PC-9 (cell line): ENCODE measurements at regions of chr3 and their contacts with region 1.

Region 1: GRCh38 chr3:141487521-141488252 is 860 bp downstream of the RASA2 start:
- DNase-seq: peak; percentile 72 to 82
- H3K4me3 ChIP-seq: peak overlapping the region; percentile 76
- H3K27ac ChIP-seq: peak overlapping the region; percentile 90
- H3K4me1 ChIP-seq: peaks cover 50% of the 10 kb centered on the region
- H3K27me3 ChIP-seq: no peaks in the 10 kb centered on the region
- CTCF ChIP-seq: no peak

Region 2: GRCh38 chr3:141275026-141275910 is 212.4 kb before region 1 on chr3:
- CTCF ChIA-PET with region 1: no interaction called
- POLR2A ChIA-PET with region 1: no interaction called
- intact Hi-C with region 1: no loop called
- DNase-seq: peak; percentile 48 to 98
- H3K4me3 ChIP-seq: peak overlapping the region; percentile 37; the same call in 1 of the 2 replicates
- H3K27ac ChIP-seq: peak overlapping the region; percentile 100
- H3K4me1 ChIP-seq: peaks cover 77% of the 10 kb centered on the region
- H3K27me3 ChIP-seq: no peaks in the 10 kb centered on the region
- CTCF ChIP-seq: no peak

Region 3: DNA sequence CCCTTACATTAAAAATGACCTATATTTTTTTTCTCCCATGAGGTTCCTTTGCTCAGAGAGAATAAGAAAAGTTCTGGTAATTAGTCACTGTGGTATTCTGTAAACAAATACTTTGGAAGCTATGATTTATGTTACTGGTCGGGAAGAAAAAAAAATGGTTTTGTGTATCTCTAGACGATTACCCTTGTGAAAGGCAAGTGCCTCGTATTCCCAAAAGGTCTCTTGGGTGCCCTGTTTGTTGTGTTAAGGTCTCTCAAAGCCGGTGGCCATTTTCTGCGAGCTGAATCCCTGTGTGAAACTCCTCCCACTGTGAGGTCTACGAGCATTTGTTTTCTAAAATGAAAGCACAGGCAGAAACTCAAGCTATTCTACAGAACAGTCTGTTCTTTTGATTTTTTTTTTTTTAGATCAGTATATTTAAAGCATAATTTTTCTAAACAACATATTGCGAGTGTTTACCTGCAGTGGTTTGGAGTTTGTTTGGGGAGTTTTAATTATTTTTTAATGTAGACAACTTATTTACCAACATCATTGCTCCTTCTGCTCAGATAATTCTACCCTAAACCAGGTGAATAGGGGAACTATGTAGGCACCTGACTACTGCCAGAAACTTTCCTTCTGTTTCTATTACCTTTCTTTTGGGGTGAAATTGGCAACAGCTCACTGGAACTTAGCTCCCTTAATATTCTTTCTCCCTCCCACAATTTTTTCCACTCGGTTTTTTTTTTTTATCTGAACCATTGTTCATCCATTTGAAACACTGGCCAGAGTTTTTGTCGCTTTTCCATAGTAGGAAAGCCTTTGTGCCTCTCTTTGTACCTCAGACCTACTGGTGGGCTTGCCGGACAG is 75.4 kb before region 1 on chr3:
- CTCF ChIA-PET with region 1: no interaction called
- POLR2A ChIA-PET with region 1: no interaction called
- intact Hi-C with region 1: no loop called
- DNase-seq: peak; percentile 33 to 80
- H3K4me3 ChIP-seq: peak overlapping the region; percentile 37; the same call in 1 of the 2 replicates
- H3K27ac ChIP-seq: peak overlapping the region; percentile 47
- H3K4me1 ChIP-seq: peaks cover 49% of the 10 kb centered on the region
- H3K27me3 ChIP-seq: no peaks in the 10 kb centered on the region
- CTCF ChIP-seq: no peak

Region 4: GRCh38 chr3:141460097-141460704 is 27.5 kb before region 1 on chr3:
- CTCF ChIA-PET with region 1: no interaction called
- POLR2A ChIA-PET with region 1: no interaction called
- intact Hi-C with region 1: loop called (anchors 2 kb)
- DNase-seq: peak; percentile 57 to 86
- H3K4me3 ChIP-seq: no peak overlapping the region
- H3K27ac ChIP-seq: no peak overlapping the region
- H3K4me1 ChIP-seq: peaks cover 13% of the 10 kb centered on the region
- H3K27me3 ChIP-seq: no peaks in the 10 kb centered on the region
- CTCF ChIP-seq: peak; percentile 83

Region 5: GRCh38 chr3:141530133-141530768 is 42.6 kb after region 1 on chr3:
- CTCF ChIA-PET with region 1: no interaction called
- POLR2A ChIA-PET with region 1: no interaction called
- intact Hi-C with region 1: loop called (anchors 1 kb)
- DNase-seq: peak in 1 of 2 experiments; percentile 78
- H3K4me3 ChIP-seq: peak overlapping the region; percentile 19; the same call in 1 of the 2 replicates
- H3K27ac ChIP-seq: peak overlapping the region; percentile 77
- H3K4me1 ChIP-seq: peaks cover 31% of the 10 kb centered on the region
- H3K27me3 ChIP-seq: no peaks in the 10 kb centered on the region
- CTCF ChIP-seq: no peak

Region 6: GRCh38 chr3:141875374-141875892 is 387.7 kb after region 1 on chr3:
- CTCF ChIA-PET with region 1: no interaction called
- POLR2A ChIA-PET with region 1: interaction called, 5 read pairs
- intact Hi-C with region 1: loop called (anchors 10 kb)
- DNase-seq: peak; percentile 61 to 85
- H3K4me3 ChIP-seq: peak overlapping the region; percentile 92
- H3K27ac ChIP-seq: 0 out of 2 replicates have a peak overlapping the region, but pooled peaks have one; percentile 0
- H3K4me1 ChIP-seq: peaks cover 20% of the 10 kb centered on the region
- H3K27me3 ChIP-seq: no peaks in the 10 kb centered on the region
- CTCF ChIP-seq: peak; percentile 78